ENCODE measurements at regions of chr12 and their contacts with region 1.

Region 1: GRCh38 chr12:9750276-9751203 is 10.2 kb downstream of the CD69 start:
- DNase-seq: peak; percentile 53
- ATAC-seq: peak; percentile 84

Region 2: DNA sequence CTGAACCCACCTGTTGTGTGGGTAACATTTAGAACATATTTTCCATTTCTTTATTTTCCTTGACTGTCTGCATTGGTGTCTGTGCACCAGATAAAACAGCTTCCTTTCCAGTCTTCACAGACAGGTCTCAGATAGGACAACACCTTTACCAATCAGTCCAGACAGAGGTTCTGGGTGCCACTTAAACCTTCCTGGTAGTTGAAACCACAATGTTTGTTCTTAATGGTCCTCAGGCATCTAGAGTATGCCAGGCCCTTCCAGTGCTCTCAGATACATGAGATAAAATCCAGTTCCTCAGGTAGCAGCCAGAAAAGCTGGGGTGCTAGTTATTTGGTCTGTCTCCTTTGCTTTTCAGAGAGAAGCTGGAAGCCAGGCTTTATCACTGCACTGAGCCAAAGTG is 88.0 kb before region 1 on chr12:
- intact Hi-C with region 1: no loop called
- DNase-seq: no peak
- ATAC-seq: no peak

Region 3: DNA sequence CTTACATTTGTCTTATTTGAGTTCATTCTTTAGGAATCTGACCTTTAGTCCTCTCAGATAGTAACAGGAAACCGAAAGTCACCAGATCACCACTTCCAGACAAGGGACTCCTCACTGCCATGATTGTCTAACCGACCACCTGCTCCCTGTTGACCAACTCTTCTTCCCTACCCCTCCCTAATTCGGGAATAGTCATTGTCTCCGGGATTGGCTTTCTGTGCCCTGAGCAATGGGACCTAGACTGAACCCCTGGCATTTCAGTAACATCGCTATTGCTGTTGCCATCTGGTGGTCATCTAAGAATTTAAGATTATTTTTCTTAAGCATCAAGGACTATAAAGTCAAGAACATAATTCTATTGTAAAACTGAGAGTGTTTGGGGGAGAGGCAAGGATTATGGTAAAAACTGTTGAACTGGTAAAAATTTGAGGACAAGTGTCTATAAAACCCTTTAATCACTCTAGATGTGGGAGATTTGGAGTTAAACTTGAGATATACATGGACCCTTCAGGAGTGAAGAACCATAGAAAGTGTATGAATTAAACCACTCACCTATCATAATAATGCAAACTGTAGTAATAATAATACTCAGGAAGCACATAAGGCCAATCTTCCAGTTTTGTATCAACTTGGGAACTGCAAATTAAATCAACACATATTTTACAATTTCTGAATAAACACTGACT is 175.3 kb after region 1 on chr12:
- intact Hi-C with region 1: loop called (anchors 2 kb)
- DNase-seq: no peak
- ATAC-seq: peak; percentile 23

Region 4: DNA sequence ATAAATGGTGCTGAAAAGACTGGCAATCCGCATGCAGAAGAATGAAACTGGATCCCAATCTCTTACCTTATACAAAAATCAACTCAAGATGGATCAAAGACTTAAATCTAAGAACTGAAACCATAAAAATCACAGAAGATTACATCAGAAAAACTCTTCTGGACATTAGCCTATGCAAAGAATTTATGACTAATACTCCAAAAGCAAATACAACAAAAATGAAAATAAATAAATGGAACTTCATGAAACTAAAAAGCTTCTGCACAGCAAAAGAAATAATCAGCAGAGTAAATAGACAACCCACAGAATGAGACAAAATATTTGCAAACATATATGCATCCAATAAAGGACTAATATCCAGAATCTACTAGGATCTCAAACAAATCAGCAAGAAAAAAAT is 362.5 kb after region 1 on chr12:
- intact Hi-C with region 1: no loop called
- DNase-seq: no peak
- ATAC-seq: no peak

Region 5: DNA sequence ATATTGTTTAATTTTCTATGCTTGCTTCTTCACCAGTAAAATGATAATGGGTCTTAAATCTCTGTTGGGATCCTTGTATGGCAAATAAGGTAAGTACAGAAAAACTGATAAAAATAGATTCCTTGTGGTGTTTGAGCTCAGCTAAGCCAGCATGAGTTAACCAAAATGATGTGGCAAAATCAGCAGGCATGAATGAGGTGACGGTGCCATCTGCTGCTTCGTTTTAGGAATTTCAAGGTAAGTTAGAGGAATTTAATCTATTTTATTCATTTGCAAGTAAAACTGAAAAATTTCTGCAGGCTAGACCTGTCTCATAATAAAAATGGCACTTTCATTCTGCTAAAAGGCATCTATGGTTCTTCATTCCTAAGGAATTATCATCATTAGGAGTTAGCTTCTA is 389.5 kb after region 1 on chr12:
- intact Hi-C with region 1: loop called (anchors 5 kb)
- DNase-seq: peak; percentile 54
- ATAC-seq: no peak

Region 6: DNA sequence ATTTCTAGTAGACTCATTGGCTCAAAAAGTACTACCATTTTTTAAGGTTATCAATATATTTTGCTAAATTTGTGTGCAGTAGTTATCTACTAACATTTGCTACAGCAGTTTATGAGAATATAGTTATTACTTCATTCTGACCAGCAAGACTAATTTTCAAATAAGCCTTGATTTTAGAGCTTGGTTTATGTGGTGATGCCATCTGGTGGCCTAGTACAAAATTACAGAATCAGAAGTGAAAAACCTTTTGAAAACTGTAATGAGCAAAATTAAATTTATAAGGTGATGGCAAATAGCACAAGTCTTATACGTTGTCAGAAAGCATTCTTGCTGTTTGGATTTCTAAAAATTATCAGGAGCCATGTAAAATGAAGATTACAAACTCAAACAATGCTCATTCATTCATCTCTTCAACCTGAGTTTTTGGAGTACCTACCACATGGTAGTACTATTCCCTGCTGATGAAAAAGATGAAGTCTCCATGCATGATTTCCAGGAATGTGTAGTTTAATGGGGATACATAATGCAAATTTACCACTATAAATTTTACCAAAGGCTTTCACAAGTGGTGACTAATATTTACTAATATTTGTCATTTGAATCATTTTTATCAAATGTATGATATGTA is 811.9 kb after region 1 on chr12:
- intact Hi-C with region 1: loop called (anchors 10 kb)
- DNase-seq: no peak
- ATAC-seq: no peak

Measured in Right ventricle myocardium inferior (tissue), 1 donor.